ENCODE measurements at regions of chr5 and their contacts with region 1.

Region 1: DNA sequence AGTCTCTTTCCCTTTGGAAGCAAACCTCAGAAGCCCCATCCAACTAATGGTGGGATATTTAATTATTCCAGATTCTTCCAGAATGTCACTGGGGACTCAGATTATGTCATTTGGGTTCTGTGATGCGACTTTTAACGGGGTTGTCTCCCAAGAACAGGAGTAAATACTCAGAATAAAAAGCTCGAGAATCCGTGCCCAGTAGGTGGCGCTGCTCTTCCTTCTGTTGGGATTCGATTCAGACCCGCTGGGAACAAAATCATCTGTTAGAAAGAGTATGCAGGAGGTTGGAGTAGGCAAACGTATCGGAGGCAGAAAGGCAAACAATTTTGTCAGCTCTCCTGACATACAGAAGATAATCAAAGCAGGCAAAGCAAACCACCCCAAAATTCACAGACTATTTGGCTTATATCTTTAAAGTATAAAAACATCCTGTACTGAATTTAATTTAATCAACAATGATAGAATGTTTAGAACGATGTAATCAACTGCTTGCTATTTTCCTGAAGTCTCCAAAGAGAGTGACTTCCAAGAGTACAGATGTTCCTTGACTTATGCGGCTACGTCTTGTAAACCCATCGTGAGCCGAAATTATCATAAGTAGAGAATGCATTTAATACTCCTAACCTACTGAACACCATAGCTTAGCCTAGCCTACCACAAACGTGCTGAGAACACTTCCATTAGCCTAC is 169.8 kb upstream of the RAI14 start:
- DNase-seq: peak; percentile 79 to 86
- H3K4me3 ChIP-seq: no peak overlapping the region
- H3K27ac ChIP-seq: peak overlapping the region in 1 of 3 donors; percentile 82
- H3K4me1 ChIP-seq: peaks cover 18 to 22% of the 10 kb centered on the region in 2 donors
- H3K27me3 ChIP-seq: no peaks in the 10 kb centered on the region
- CTCF ChIP-seq: peak; percentile 68 to 80 (median 72)
- POLR2A ChIP-seq: no peak

Region 2: DNA sequence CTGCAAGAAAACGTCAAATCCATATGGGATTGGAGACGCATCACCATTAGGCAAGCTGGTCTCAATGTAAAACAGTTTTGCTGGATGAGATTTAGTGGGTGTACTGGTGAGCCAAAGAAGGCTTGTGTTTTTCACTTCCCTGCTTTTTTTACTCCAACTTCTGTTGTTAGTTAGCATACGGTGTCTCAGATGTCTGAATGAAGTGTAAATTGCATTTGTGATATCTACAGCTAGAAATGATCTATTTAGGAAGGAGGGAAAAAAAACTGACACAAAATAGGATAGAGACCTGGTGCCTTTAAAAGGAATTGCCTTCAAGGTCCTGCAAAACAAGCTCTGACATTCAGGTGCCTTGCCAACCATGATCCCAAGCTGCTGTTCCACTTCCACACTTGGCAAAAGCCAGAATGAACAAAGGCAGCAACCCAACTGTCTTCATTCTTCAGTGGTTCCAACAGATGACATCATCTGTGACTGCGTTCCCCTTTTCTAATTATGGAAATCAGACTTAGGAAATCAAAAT is 65.7 kb after region 1 on chr5:
- intact Hi-C with region 1: no loop called
- DNase-seq: peak; percentile 44 to 72
- H3K4me3 ChIP-seq: no peak overlapping the region
- H3K27ac ChIP-seq: no peak overlapping the region
- H3K4me1 ChIP-seq: peaks cover 6 to 11% of the 10 kb centered on the region in 2 donors
- H3K27me3 ChIP-seq: no peaks in the 10 kb centered on the region
- CTCF ChIP-seq: no peak
- POLR2A ChIP-seq: no peak

Region 3: GRCh38 chr5:34898258-34898895 is 412.1 kb after region 1 on chr5:
- intact Hi-C with region 1: loop called (anchors 5 kb)
- DNase-seq: peak; percentile 58 to 66
- H3K4me3 ChIP-seq: no peak overlapping the region
- H3K27ac ChIP-seq: no peak overlapping the region
- H3K4me1 ChIP-seq: no peaks in the 10 kb centered on the region
- H3K27me3 ChIP-seq: no peaks in the 10 kb centered on the region
- CTCF ChIP-seq: peak in 5 of 6 experiments; percentile 65 to 78 (median 76)
- POLR2A ChIP-seq: no peak

Region 4: DNA sequence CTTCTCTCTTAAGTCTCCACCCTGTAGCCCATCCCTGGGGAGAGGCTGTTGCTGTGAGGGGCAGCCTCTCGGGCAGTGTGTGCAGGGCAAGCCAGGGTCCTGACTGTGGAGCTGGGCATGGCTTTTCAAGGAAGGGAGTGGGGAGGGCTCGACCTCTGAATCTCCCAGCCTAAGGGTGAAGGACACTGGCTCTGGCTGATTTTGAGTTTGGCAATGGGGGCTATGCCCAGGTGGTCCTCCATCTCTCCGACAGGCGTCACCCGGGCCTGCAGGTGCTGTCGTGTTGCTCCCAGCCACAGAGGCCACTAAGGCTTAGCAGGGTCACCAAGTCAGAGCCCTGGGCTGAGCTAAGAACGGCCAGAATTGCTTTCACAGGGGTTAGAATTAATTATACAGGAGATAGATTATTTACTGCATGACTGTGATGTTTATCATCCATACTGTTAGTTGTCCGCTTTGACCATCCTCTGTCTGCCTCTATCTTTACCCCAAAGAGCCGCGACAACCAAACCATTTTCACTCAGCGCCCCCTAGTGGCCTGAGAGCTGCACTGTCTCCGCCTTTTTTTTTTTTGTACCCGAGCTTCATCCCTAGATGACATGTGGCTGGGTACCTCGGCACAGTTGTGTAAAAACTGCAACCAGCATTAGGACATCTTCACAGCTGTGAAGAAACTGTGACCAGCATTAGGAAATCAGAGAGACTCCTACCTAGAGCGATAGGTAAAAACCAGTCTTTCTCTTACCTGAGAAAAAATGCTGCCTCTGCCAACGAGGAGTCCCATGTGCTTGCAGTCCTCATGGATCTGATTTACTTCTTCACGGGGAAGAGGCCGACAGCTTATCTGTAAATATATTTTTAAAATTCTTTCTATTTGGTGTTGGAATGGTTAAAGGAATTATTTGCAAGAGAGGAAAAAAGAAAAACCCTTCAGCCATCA is 517.0 kb after region 1 on chr5:
- intact Hi-C with region 1: loop called (anchors 10 kb)
- DNase-seq: peak; percentile 49 to 68
- H3K4me3 ChIP-seq: no peak overlapping the region
- H3K27ac ChIP-seq: no peak overlapping the region
- H3K4me1 ChIP-seq: no peaks in the 10 kb centered on the region
- H3K27me3 ChIP-seq: no peaks in the 10 kb centered on the region
- CTCF ChIP-seq: peak; percentile 41 to 87 (median 74)
- POLR2A ChIP-seq: no peak

Measured in thyroid gland (tissue), 4 donors.